ENCODE measurements at regions of chr7 and their contacts with region 1.

Region 1: DNA sequence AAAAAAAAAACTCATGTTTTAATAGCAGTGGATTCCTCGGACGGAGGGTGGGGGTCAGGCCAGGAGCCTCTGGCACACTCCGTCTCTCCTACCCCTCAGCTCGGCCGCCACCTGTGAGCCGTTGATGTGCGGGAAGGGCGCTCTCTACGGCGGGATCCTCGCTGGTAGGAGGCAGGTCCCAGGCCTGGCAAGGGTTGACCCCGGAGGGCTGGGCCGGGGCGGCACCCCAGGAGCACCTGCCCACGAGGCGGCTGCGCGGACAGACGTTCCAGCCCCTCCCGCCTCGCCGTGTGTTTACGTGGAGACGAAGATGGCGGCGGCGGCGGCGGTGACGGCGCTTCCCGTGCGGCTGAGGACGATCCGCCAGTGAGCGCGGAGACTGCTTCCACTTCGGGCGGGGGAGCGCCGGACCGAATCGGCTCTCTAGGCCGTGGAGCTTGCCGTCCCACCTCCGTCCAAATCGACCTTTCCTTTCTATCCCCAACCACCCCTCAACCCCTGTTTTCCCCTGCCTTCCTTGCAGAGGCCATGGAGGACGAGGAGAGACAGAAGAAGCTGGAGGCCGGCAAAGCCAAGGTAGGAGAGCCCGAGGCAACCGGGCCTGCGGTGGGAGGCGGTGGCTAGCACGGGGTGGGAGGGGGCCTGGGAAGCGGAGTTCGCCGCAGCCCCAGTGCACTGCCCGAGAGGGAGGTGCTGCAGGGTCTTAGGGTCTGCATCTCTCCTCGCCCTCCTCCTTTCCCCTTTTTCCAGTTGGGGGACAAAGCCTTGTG is at the start of gene AKAP9:
- DNase-seq: peak; percentile 79 to 89 (median 88)
- ATAC-seq: peak; percentile 93
- H3K4me3 ChIP-seq: peak within 1 kb of the TSS; percentile 97
- H3K4me3 Mint-ChIP-seq: peak within 1 kb of the TSS; percentile 85 to 98 (median 92)
- H3K27ac ChIP-seq: peak within 1 kb of the TSS; percentile 93
- H3K27ac Mint-ChIP-seq: peak within 1 kb of the TSS; percentile 90 to 98 (median 95)
- H3K4me1 ChIP-seq: peaks cover 15 to 16% of the 10 kb centered on the region in 2 donors
- H3K4me1 Mint-ChIP-seq: peaks cover 28 to 54% (median 44%) of the 10 kb centered on the region in 7 donors
- H3K27me3 ChIP-seq: no peaks in the 10 kb centered on the region
- H3K27me3 Mint-ChIP-seq: peaks cover 0 to 2% (median 0%) of the 10 kb centered on the region in 5 donors
- total RNA-seq, gene AKAP9: 50.0 to 93.5 (median 66.1) TPM

Region 2: GRCh38 chr7:90244909-90245851 is 1695.6 kb before region 1 on chr7 and contains the start of gene CFAP69:
- CTCF ChIA-PET with region 1: no interaction called
- POLR2A ChIA-PET with region 1: no interaction called
- intact Hi-C with region 1: loop called in 1 of 2 experiments (anchors 5 kb)
- DNase-seq: peak; percentile 79 to 88 (median 84)
- ATAC-seq: peak; percentile 95
- H3K4me3 ChIP-seq: peak within 1 kb of the TSS; percentile 70
- H3K4me3 Mint-ChIP-seq: peak within 1 kb of the TSS; percentile 88 to 97 (median 92)
- H3K27ac ChIP-seq: peak within 1 kb of the TSS; percentile 50
- H3K27ac Mint-ChIP-seq: peak within 1 kb of the TSS in 8 of 9 donors; percentile 19 to 90 (median 78)
- H3K4me1 ChIP-seq: peaks cover 6 to 8% of the 10 kb centered on the region in 2 donors
- H3K4me1 Mint-ChIP-seq: peaks cover 8 to 27% (median 15%) of the 10 kb centered on the region in 7 donors
- H3K27me3 ChIP-seq: no peaks in the 10 kb centered on the region
- H3K27me3 Mint-ChIP-seq: peaks cover 11 to 59% (median 28%) of the 10 kb centered on the region in 5 donors
- total RNA-seq, gene CFAP69: 0.30 to 0.80 TPM in 2 of 5 experiments, not detected in the others

Region 3: DNA sequence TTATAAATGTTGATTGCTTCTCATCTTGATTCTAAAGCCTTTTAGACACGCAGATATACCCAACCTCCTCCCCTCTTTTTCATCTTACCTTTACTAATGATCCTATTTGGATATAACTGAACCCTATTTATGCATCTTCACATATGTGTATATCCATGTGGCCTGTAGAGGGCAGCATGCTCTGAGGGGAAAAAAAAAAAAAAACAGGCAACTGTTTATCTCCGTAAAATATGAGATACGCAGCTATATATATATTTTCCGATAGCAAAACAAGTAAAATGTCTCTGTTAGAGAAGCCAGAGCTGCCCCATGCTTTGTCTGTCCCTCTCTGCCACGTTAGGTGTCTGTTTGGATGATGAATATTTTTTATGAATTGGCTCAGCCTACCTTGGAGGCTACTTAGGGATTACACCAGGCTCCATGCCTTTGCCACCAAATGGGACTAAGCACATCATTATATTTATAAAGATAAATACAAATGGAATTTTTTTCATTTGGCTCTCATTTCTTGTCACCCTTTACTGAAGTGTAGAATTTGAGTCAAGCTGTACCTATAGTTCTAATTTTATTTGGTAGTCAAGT is 851.3 kb before region 1 on chr7:
- CTCF ChIA-PET with region 1: no interaction called
- POLR2A ChIA-PET with region 1: no interaction called
- intact Hi-C with region 1: loop called in 1 of 2 experiments (anchors 5 kb)
- DNase-seq: peak in 6 of 9 donors; percentile 33 to 52 (median 38)
- ATAC-seq: peak; percentile 78
- H3K4me3 ChIP-seq: no peak overlapping the region
- H3K4me3 Mint-ChIP-seq: peak overlapping the region; percentile 2 to 71 (median 43)
- H3K27ac ChIP-seq: no peak overlapping the region
- H3K27ac Mint-ChIP-seq: peak overlapping the region in 4 of 9 donors; percentile 0 to 29 (median 12)
- H3K4me1 ChIP-seq: peaks cover 0 to 12% of the 10 kb centered on the region in 2 donors
- H3K4me1 Mint-ChIP-seq: peaks cover 14 to 36% (median 29%) of the 10 kb centered on the region in 7 donors
- H3K27me3 ChIP-seq: no peaks in the 10 kb centered on the region
- H3K27me3 Mint-ChIP-seq: peaks cover 0 to 9% (median 0%) of the 10 kb centered on the region in 5 donors

Region 4: DNA sequence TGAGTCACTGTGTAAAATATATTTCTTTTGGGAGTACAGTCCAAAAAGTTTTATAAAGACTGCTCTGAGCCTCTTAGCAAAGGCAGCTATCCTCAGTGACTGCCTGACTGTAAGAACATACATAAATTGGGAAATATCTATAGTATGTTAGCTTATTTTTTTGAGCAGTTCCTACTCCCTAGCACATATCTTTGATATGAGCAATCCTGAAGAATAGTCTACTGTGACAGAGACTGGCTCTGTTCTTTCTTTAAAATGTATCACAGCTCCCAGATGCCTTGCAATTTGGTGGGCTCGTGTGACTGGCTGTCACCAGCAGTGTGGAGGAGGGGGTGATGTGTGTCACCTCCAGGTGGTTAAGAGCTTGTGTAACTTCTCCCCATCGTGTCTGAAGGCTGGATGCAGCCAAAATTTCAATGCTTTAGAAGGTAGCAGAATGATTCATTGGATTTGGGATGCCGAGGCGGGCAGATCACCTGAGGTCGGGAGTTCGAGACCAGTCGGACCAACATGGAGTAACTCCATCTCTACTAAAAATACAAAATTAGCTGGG is 108.2 kb before region 1 on chr7:
- CTCF ChIA-PET with region 1: no interaction called
- POLR2A ChIA-PET with region 1: no interaction called
- intact Hi-C with region 1: loop called in 1 of 2 experiments (anchors 5 kb)
- DNase-seq: no peak
- ATAC-seq: no peak
- H3K4me3 ChIP-seq: no peak overlapping the region
- H3K4me3 Mint-ChIP-seq: no peak overlapping the region
- H3K27ac ChIP-seq: no peak overlapping the region
- H3K27ac Mint-ChIP-seq: no peak overlapping the region
- H3K4me1 ChIP-seq: no peaks in the 10 kb centered on the region
- H3K4me1 Mint-ChIP-seq: peaks cover 0 to 1% (median 0%) of the 10 kb centered on the region in 7 donors
- H3K27me3 ChIP-seq: no peaks in the 10 kb centered on the region
- H3K27me3 Mint-ChIP-seq: peaks cover 0 to 6% (median 0%) of the 10 kb centered on the region in 5 donors

Region 5: GRCh38 chr7:92245487-92246362 is 305.0 kb after region 1 on chr7 and contains the starts of genes ANKIB1 and KRIT1:
- CTCF ChIA-PET with region 1: no interaction called
- POLR2A ChIA-PET with region 1: interaction called, 7 read pairs
- intact Hi-C with region 1: loop called (anchors 1 kb)
- DNase-seq: peak; percentile 68 to 88 (median 86)
- ATAC-seq: peak; percentile 87
- H3K4me3 ChIP-seq: peak within 1 kb of the TSS; percentile 80
- H3K4me3 Mint-ChIP-seq: peak within 1 kb of the TSS; percentile 97 to 100 (median 98)
- H3K27ac ChIP-seq: peak within 1 kb of the TSS; percentile 92
- H3K27ac Mint-ChIP-seq: peak within 1 kb of the TSS; percentile 98 to 100 (median 100)
- H3K4me1 ChIP-seq: peaks cover 15 to 22% of the 10 kb centered on the region in 2 donors
- H3K4me1 Mint-ChIP-seq: peaks cover 30 to 64% (median 45%) of the 10 kb centered on the region in 7 donors
- H3K27me3 ChIP-seq: no peaks in the 10 kb centered on the region
- H3K27me3 Mint-ChIP-seq: no peaks in the 10 kb centered on the region
- total RNA-seq, gene ANKIB1: 54.8 to 98.6 (median 68.2) TPM
- total RNA-seq, gene KRIT1: 45.7 to 78.7 (median 48.6) TPM

Measured in naive thymus-derived CD4-positive, alpha-beta T cell (primary cell).